ENCODE measurements at regions of chr10 and their contacts with region 1.

Region 1: GRCh38 chr10:77889277-77889903 is 37.2 kb downstream of the DLG5 start:
- DNase-seq: no peak
- H3K4me3 ChIP-seq: no peak overlapping the region
- CTCF ChIP-seq: no peak

Region 2: GRCh38 chr10:77801474-77802161 is 87.8 kb before region 1 on chr10:
- in situ Hi-C with region 1: no loop called
- DNase-seq: no peak
- H3K4me3 ChIP-seq: no peak overlapping the region
- CTCF ChIP-seq: no peak

Region 3: DNA sequence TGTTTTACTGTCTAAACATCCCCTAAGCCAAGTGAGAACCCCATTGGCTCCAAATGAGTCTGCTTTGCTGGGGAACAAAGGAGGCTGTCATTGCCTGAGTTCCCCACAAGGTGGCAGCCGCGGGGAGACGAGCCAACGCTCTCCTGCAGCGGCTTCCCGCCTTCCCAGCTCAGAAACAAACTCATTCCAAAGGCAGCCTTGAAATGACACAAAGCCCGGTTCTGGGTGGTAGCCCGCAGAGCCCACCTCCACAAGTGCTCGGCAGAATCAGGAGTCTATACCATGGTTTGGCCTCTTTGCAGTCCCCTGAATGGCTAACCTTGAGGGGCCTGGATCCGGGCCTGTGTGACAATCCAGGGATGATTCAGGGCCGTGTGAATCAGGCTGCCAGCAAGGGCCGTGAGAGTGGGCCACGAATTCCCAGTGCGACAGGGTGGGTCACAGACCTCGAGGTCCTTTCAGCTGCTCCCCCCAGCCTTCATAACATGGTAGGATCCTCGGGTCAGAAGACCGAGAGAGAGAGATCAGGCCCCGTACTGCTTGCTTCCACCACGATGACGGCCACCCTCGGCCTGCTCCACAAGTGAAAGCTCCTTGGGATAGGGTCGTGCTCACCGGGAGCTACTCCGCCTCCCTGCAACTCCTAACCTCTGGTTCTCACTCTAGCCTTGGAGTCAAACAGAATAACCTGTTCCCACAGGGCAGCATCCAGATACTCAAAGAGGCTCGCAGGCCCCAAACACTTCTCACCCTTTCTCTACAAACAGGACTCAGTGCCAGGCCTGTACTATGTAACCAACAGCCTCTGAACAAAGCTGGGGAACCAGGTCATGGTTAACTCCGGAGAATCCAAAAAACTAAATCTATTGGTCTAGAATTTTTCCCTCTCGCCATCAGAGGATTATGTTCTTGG is 42.4 kb before region 1 on chr10:
- in situ Hi-C with region 1: loop called (anchors 5 kb)
- DNase-seq: peak; percentile 48
- H3K4me3 ChIP-seq: no peak overlapping the region
- CTCF ChIP-seq: peak; percentile 97

Region 4: GRCh38 chr10:77857254-77857653 is 32.1 kb before region 1 on chr10:
- in situ Hi-C with region 1: no loop called
- DNase-seq: no peak
- H3K4me3 ChIP-seq: no peak overlapping the region
- CTCF ChIP-seq: no peak

Region 5: GRCh38 chr10:77926566-77927401 is 37.4 kb after region 1 on chr10 and contains the start of gene DLG5:
- in situ Hi-C with region 1: loop called (anchors 5 kb)
- DNase-seq: no peak
- H3K4me3 ChIP-seq: peak within 1 kb of the TSS; percentile 72
- CTCF ChIP-seq: no peak

Region 6: DNA sequence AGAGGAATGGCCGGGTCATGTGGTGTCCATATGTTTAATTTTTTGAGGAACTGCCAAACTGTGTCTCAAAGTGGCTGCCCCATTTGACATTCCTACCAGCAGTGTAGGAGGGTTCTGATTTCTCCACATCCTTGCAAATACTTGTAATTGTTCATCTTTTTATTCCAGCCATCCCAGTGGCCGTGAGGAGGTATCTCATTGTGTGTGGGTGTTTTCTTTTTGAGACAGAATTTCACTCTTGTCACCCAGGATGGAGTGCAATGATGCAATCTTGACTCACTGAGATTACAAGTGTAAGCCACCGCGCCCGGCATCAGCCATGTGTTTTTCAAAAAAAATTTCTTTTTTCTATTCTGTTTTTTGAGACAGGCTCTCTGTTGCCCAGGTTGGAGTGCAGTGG is 75.9 kb after region 1 on chr10:
- in situ Hi-C with region 1: no loop called
- DNase-seq: no peak
- H3K4me3 ChIP-seq: no peak overlapping the region
- CTCF ChIP-seq: no peak

Region 7: DNA sequence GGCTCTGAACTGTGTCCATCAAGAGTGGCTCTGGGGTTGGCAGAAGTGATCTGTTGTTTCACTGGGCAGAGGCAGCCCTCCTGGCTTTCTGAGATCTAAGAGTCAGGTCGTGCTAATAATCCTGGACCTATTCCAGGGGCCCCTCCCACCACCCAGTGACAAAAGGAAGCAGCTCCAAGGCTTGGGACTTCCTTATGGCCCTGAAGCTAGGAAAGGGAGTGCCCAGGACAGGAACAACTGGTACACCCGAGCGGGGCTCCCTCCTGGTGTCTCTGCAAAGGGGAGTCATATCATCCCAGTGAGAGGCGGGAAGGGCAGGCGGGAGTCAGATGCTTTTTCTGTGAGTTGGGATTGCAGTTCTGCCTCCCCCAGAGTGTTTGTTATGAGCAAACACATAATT is 176.6 kb after region 1 on chr10:
- in situ Hi-C with region 1: no loop called
- DNase-seq: no peak
- H3K4me3 ChIP-seq: no peak overlapping the region
- CTCF ChIP-seq: no peak

Measured in astrocyte of the cerebellum (primary cell).